Naive thymus-derived CD4-positive, alpha-beta T cell (primary cell): ENCODE measurements at regions of chr6 and their contacts with region 1.

Region 1: DNA sequence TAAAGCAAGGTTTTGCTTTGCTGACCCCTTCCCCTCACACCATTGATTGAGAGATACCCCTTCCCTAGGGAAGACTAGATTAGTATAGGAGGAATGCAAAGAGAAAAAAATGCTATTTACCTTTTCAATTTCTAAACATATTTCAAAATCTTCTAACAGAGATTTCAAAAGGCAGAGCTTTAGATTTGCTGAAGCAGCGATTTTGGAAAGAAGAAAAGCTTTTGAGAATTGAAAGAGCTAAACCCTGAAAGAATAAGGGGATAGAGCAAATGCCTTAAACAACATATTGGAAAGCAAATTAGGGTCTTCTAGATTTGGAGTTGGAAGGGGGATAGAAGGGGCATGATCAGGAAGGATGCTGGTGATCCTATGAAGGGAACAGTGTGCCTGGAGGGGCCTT is 46.5 kb upstream of the KLHL31 start:
- DNase-seq: no peak
- ATAC-seq: no peak
- H3K4me3 ChIP-seq: no peak overlapping the region
- H3K4me3 Mint-ChIP-seq: no peak overlapping the region
- H3K27ac ChIP-seq: no peak overlapping the region
- H3K27ac Mint-ChIP-seq: no peak overlapping the region
- H3K4me1 ChIP-seq: no peaks in the 10 kb centered on the region
- H3K4me1 Mint-ChIP-seq: no peaks in the 10 kb centered on the region
- H3K27me3 ChIP-seq: no peaks in the 10 kb centered on the region
- H3K27me3 Mint-ChIP-seq: peaks cover 23 to 39% (median 32%) of the 10 kb centered on the region in 5 donors

Region 2: DNA sequence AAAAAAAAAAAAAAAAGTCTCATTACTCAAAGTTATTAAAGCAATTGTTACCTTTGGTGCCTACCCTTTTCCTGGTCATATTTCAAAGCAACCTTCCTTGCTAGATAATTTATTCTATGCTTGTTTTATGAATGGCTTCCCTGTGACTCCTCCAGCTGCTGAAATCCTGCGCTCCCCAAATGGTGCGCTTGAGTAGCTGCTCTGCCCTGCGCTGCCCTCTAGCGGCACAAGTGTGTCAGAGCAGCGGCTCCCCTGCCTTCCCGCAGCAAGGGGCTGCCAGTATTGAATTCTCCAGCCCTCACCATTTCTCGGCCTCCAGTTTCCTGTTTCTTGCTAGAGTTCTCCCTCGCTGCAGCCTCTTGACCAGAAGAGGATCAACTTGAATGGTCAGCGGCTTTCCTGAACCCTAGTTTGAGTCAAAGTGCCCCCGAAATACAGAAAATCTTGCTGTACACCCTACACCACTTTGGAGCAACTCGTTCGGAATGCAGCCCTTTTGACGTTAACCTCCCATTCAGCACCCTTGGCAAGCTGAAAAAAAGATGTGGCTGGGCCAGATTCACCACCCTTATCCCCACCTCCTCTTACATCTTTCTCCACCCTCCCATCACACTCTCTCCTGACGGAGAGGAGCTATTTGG is 13.8 kb after region 1 on chr6:
- CTCF ChIA-PET with region 1: interaction called, 21 read pairs
- POLR2A ChIA-PET with region 1: no interaction called
- intact Hi-C with region 1: no loop called
- DNase-seq: peak; percentile 46 to 79 (median 63)
- ATAC-seq: peak; percentile 95
- H3K4me3 ChIP-seq: no peak overlapping the region
- H3K4me3 Mint-ChIP-seq: peak overlapping the region in 1 of 10 donors; percentile 59
- H3K27ac ChIP-seq: no peak overlapping the region
- H3K27ac Mint-ChIP-seq: peak overlapping the region in 1 of 9 donors; percentile 63
- H3K4me1 ChIP-seq: no peaks in the 10 kb centered on the region
- H3K4me1 Mint-ChIP-seq: peaks cover 0 to 14% (median 4%) of the 10 kb centered on the region in 7 donors
- H3K27me3 ChIP-seq: no peaks in the 10 kb centered on the region
- H3K27me3 Mint-ChIP-seq: peaks cover 15 to 24% (median 22%) of the 10 kb centered on the region in 5 donors